HCT116 (cell line): ENCODE measurements at regions of chrX and their contacts with region 1.

Region 1: DNA sequence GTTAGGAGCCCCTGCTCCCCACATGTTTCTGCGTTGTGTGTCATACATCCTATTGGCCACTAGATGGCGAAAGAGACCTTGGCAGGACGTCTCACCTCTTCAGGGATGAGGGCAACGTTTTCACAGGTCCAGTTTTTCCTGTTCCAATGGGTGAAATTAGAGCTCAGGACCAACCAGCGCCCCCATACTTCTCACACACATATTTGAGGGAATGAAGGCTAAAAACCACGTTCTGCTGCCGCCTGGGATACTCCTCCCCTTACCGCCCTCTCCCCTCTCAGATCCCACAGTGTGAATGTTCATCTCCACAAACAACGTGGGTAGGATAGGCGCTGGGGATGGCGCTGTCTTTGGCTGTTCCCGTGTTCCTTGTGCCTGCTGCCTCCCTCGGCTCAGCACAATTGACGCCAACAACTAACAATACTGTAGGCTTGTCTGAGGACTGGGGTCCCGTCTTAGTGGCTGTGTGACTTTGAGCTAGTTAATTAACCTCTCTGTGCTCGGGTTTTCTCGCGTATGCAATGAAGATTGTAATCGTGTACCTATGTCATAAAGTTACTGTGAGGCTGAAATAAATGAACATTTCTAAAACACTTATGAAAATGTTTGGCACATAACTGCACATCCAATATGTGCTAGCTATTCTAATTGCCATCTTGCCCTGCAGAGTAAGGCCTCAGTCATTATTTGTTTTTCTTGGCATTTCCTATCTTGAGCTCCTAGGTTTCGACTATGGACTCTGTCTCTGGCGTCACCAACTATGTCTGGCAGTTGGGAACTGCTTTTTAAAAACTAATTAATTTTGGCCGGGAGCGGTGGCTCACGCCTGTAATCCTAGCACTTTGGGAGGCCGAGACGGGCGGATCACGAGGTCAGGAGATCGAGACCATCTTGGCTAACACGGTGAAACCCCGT is 181.3 kb upstream of the STK26 start:
- DNase-seq: peak; percentile 40
- ATAC-seq: peak; percentile 95
- H3K4me3 ChIP-seq: no peak overlapping the region
- H3K27ac ChIP-seq: no peak overlapping the region
- H3K4me1 ChIP-seq: peaks cover 0 to 5% of the 10 kb centered on the region in 2 experiments; a peak in 1 of 4 replicates
- H3K27me3 ChIP-seq: no peaks in the 10 kb centered on the region
- CTCF ChIP-seq: peak; percentile 67 to 72 (median 68)
- POLR2A ChIP-seq: no peak
- RAD21 ChIP-seq: peak; percentile 84

Region 2: DNA sequence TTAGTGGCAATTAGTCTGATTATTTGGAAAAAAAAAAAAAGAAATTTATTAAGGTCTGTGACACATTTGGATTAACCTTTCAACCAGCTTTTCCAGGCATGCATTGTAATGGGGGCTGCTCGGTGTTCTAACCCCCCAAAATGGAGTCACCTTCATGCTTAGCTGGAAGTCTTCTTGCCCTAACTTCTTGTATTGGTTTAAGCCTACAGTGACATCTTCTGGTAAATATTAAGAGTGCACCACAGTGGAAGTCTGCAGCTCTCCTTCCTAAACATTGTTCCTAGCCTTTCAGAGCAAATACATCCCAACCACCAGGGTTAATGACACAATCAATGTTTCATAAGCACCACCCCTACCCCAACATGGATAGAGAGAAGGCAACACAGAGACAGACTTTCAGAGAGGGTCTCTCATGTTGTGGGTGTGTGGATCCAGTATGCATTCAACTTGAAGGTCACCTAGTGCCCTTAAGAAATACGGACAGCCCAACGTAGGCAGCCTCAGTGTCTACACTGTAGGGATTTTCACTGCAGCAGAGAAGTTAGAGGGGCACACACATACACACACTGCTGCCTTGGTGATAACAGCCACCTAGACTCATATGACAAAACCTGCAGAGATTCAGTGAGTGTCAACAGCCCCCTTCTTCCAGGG is 790.0 kb after region 1 on chrX:
- CTCF ChIA-PET with region 1: no interaction called
- POLR2A ChIA-PET with region 1: no interaction called
- RAD21 ChIA-PET with region 1: no interaction called
- intact Hi-C with region 1: loop called (anchors 5 kb)
- DNase-seq: no peak
- ATAC-seq: peak; percentile 75
- H3K4me3 ChIP-seq: no peak overlapping the region
- H3K27ac ChIP-seq: no peak overlapping the region
- H3K4me1 ChIP-seq: no peaks in the 10 kb centered on the region
- H3K27me3 ChIP-seq: no peaks in the 10 kb centered on the region
- CTCF ChIP-seq: peak; percentile 26 to 50 (median 40); a peak in 5 of 6 replicates
- POLR2A ChIP-seq: no peak
- RAD21 ChIP-seq: peak; percentile 50